Aorta (tissue), 5 donors: ENCODE measurements at regions of chr14 and their contacts with region 1.

Region 1: DNA sequence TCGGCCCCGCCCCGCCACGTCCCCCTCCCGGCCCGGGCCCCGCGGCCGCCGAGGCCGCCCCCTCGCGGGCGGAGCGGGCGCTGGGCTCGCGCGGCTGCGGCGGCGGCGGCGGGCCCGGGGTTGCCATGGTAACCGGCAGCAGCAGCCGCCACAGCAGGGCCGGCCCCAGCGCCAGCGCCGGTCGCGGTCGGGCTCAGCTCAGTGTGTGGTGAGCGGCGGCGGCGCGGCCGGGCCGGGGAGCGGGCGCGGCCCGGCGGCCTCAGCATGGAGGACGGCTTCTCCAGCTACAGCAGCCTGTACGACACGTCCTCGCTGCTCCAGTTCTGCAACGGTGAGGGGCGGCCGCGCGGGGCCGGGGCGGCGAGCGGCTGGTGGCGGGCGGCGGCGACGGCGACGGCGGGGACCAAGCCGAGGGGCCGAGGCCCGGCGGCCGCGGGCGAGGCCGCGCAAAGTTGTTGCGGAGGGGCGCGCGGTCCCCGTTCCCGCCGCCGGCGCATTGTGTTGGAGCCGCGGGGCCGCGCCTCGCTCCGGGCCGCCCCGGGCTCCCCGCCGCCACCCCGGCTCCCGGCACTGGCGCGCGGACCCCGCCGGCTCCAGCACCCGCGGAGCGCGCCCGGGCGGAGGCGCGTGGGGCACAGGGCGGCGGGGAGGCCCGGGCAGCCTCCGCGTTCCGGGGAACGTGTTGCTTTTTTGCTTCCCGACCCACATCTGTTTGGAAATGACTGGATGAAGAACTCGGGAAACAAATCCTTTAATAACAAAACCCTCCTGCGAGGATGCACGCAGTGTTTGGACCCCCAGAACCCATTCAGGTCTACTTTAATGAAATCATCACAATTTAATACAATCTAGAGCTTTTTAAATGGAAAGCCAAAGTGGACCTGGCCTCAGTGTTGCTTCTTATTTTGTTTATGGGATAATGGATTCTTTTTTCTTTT is at the start of gene EML1:
- DNase-seq: peak; percentile 91 to 95
- ATAC-seq: peak; percentile 93
- H3K4me3 ChIP-seq: peak within 1 kb of the TSS; percentile 92 to 96
- H3K27ac ChIP-seq: peak within 1 kb of the TSS; percentile 69 to 93
- H3K4me1 ChIP-seq: no peaks in the 10 kb centered on the region
- H3K27me3 ChIP-seq: no peaks in the 10 kb centered on the region
- total RNA-seq, gene EML1: 45.9 to 62.0 TPM

Region 2: GRCh38 chr14:99683619-99684355 is 109.7 kb before region 1 on chr14 and contains the start of gene CYP46A1:
- intact Hi-C with region 1: loop called in 1 of 2 experiments (anchors 5 kb)
- DNase-seq: peak; percentile 100
- ATAC-seq: peak; percentile 98
- H3K4me3 ChIP-seq: peak within 1 kb of the TSS; percentile 55 to 62
- H3K27ac ChIP-seq: peak within 1 kb of the TSS in 1 of 2 donors; percentile 64
- H3K4me1 ChIP-seq: no peaks in the 10 kb centered on the region
- H3K27me3 ChIP-seq: no peaks in the 10 kb centered on the region
- total RNA-seq, gene CYP46A1: 0.68 to 3.7 TPM

Region 3: GRCh38 chr14:99729991-99730868 is 63.3 kb before region 1 on chr14:
- intact Hi-C with region 1: loop called (anchors 2 to 5 kb)
- DNase-seq: peak; percentile 80 to 94
- ATAC-seq: peak; percentile 76
- H3K4me3 ChIP-seq: peak overlapping the region; percentile 27 to 41
- H3K27ac ChIP-seq: no peak overlapping the region
- H3K4me1 ChIP-seq: no peaks in the 10 kb centered on the region
- H3K27me3 ChIP-seq: no peaks in the 10 kb centered on the region

Region 4: GRCh38 chr14:99755629-99756603 is 37.6 kb before region 1 on chr14:
- intact Hi-C with region 1: loop called in 1 of 2 experiments (anchors 5 kb)
- DNase-seq: peak; percentile 95 to 98
- ATAC-seq: peak; percentile 89
- H3K4me3 ChIP-seq: no peak overlapping the region
- H3K27ac ChIP-seq: no peak overlapping the region
- H3K4me1 ChIP-seq: peaks cover 0 to 3% of the 10 kb centered on the region in 2 donors
- H3K27me3 ChIP-seq: no peaks in the 10 kb centered on the region

Region 5: GRCh38 chr14:99884834-99885648 is 91.6 kb after region 1 on chr14:
- intact Hi-C with region 1: loop called (anchors 5 kb)
- DNase-seq: no peak
- ATAC-seq: peak; percentile 82
- H3K4me3 ChIP-seq: no peak overlapping the region
- H3K27ac ChIP-seq: no peak overlapping the region
- H3K4me1 ChIP-seq: no peaks in the 10 kb centered on the region
- H3K27me3 ChIP-seq: no peaks in the 10 kb centered on the region